ENCODE measurements at regions of chr9 and their contacts with region 1.

Region 1: DNA sequence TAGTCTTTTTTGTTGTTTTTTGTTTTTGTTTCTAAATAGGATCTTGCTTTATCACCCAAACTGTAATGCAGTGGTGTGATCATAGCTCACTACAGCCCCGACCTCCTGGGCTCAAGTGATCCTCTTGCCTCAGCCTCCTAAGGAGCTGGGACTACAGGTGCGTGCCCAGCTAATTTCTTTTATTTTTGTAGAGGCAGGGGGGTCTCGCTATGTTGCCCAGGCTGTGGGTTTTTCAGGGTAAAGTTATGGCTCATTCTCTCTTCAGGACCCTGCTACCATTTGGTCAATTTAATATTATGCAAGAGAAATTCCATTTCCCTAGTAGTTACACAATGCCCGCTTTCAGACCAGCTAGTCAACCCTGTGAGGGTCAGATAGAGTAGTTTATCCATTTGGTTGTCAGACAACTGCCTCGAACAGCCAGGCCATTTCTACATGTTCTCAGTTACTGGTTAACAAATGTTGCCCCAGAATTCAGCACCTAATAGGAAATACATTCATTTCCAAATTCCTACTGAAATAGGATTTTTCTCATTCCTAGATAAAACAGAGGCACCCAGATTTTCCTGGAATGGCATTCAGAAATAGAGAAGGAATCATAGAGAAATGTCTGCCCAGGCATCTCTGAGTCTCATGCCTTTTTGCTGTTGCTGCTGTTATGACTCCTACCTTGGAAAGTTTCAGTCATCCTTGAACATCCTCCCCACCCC is 6.4 kb upstream of the GLIS3 start:
- DNase-seq: peak; percentile 65
- ATAC-seq: peak; percentile 81
- H3K4me3 Mint-ChIP-seq: no peak overlapping the region
- H3K27ac Mint-ChIP-seq: peak overlapping the region; percentile 68
- H3K4me1 Mint-ChIP-seq: peaks cover 48% of the 10 kb centered on the region
- H3K27me3 Mint-ChIP-seq: peaks cover 3% of the 10 kb centered on the region

Region 2: DNA sequence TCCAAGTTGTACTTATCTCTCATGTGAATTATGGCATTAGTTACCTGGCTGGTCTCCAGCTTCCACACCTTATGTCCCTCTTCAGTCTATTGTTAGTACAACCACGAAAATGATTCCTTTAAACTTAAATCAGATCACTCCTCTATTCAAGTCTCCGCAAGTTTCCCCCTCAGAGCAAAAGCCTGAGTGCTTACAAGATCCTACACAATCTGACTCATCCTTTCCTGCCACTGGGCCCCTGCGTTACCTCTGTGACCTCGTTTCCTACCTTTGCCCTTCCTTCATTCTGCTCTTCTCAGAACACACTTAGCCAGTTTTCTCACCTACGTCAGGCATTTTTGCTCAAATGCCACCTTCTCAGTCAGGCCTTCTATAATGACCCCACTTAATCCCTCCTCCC is 38.7 kb after region 1 on chr9:
- CTCF ChIA-PET with region 1: interaction called, 10 read pairs
- POLR2A ChIA-PET with region 1: no interaction called
- intact Hi-C with region 1: loop called in 1 of 2 experiments (anchors 2 kb)
- DNase-seq: peak; percentile 78
- ATAC-seq: peak; percentile 98
- H3K4me3 Mint-ChIP-seq: no peak overlapping the region
- H3K27ac Mint-ChIP-seq: peak overlapping the region; percentile 28
- H3K4me1 Mint-ChIP-seq: peaks cover 21% of the 10 kb centered on the region
- H3K27me3 Mint-ChIP-seq: no peaks in the 10 kb centered on the region